Activated CD8-positive, alpha-beta T cell treated with anti-CD3 and anti-CD28 coated beads for 36 hours (primary cell): ENCODE measurements at regions of chr17 and their contacts with region 1.

Region 1: GRCh38 chr17:41648411-41649195 is 24.2 kb upstream of the KRT17 start:
- DNase-seq: peak; percentile 88
- ATAC-seq: peak; percentile 92
- H3K4me3 Mint-ChIP-seq: peak overlapping the region; percentile 43
- H3K27ac Mint-ChIP-seq: peak overlapping the region; percentile 65
- H3K4me1 Mint-ChIP-seq: peaks cover 7% of the 10 kb centered on the region
- H3K27me3 Mint-ChIP-seq: peaks cover 3% of the 10 kb centered on the region
- CTCF ChIP-seq: peak; percentile 88

Region 2: DNA sequence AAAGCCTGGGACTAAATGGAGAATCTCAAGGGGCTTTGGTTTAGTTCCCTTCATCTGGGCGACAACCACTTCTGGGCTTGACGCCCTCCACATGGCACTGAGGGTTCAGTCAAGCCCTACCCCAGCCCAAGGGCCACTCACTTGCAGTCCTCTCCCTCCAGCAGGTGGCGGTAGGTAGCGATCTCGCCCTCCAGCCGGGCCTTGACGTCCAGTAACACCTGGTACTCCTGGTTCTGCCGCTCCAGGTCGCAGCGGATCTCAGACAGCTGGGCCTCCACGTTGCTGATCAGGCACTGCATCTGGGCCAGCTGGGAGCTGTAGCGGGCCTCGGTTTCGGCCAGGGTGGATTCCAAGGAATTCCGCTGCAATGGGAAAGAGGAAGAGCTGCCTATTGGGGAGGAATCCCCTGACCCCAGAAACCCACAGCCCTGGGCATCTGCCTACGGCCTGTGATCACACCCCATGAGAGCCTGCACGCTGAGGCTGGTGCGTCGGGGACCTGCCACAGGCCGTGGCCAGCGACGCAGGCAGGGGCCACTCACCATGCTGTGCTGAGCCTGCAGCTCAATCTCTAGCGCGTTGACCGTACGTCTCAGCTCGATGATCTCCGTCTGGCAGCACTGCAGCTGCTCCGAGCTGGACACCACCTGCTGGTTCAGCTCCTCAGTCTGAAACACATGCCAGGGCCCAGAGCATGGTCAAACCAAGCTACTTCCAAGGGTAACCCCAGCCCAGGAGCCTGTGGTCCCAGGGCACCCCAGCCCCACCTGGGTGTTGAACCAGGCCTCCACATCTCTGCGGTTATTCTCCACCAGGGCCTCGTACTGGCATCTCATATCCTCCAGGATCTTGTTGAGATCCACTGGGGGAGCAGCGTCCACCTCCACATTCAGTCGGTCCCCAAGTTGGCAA is 161.5 kb before region 1 on chr17:
- CTCF ChIA-PET with region 1: interaction called, 13 read pairs
- POLR2A ChIA-PET with region 1: no interaction called
- intact Hi-C with region 1: no loop called
- DNase-seq: peak; percentile 61
- ATAC-seq: no peak
- H3K4me3 Mint-ChIP-seq: no peak overlapping the region
- H3K27ac Mint-ChIP-seq: no peak overlapping the region
- H3K4me1 Mint-ChIP-seq: peaks cover 2% of the 10 kb centered on the region
- H3K27me3 Mint-ChIP-seq: peaks cover 2% of the 10 kb centered on the region
- CTCF ChIP-seq: peak; percentile 56

Region 3: DNA sequence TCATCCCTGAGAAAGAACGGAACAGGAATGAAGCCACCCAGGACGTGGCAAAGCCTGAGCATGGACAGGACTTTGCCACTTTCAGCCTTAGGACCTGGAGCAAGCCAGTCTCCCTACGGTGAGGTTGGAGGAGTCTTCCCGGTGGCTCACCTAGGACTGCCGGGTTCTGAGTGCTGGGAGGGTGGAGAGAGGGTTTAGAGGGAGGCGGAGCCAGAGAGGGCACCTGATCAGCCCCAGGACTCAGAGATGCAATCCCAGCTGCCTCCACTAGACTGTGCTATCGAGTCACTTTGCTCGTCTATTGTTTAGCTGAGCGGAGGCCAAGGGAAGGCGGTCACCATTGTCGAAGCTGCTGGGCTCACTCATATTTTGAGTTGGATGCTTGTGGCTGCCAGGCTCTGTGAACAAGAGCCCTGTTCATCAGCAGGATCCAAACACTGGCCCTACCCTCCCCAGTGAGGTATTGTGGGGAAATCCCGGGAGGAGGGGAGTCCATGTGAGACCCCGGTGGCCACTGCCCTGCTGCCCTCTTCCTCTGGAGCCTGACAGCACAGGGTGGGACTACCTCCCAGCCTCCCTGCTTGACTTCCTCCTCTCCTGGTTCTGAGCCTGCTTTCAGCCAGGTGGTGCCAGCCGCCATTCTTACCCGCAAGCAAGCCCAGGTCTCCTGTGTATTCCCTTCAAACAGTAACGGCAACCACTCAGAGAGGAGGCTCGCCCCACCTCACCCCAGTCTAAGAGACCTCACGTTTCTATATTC is 68.9 kb before region 1 on chr17:
- CTCF ChIA-PET with region 1: interaction called, 16 read pairs
- POLR2A ChIA-PET with region 1: no interaction called
- intact Hi-C with region 1: no loop called
- DNase-seq: peak; percentile 90
- ATAC-seq: peak; percentile 100
- H3K4me3 Mint-ChIP-seq: no peak overlapping the region
- H3K27ac Mint-ChIP-seq: no peak overlapping the region
- H3K4me1 Mint-ChIP-seq: no peaks in the 10 kb centered on the region
- H3K27me3 Mint-ChIP-seq: peaks cover 38% of the 10 kb centered on the region
- CTCF ChIP-seq: peak; percentile 71

Region 4: DNA sequence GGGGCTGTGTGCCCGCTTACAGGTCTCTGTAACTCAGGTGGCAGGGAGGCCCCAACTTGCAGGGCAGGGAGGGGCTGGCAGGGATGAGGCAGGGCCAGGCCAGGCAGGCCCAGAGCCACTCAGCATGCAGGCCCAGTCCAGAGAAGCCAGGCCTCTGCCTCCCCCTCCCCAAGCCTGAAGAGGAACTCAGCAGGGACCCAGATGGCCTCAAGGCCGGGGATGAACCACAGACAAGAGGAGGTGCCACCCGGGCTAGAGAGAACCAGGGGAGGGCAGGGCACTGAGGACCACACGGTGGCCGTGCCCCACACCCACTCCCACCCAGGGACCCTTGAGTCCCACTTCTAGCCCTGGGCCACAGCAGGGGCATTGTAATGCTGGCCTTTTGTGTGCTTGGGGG is 10.2 kb after region 1 on chr17:
- CTCF ChIA-PET with region 1: interaction called, 435 read pairs
- POLR2A ChIA-PET with region 1: interaction called, 4 read pairs
- intact Hi-C with region 1: no loop called
- DNase-seq: no peak
- ATAC-seq: no peak
- H3K4me3 Mint-ChIP-seq: no peak overlapping the region
- H3K27ac Mint-ChIP-seq: no peak overlapping the region
- H3K4me1 Mint-ChIP-seq: no peaks in the 10 kb centered on the region
- H3K27me3 Mint-ChIP-seq: peaks cover 1% of the 10 kb centered on the region
- CTCF ChIP-seq: no peak

Region 5: GRCh38 chr17:41678907-41679739 is 30.5 kb after region 1 on chr17:
- CTCF ChIA-PET with region 1: interaction called, 14 read pairs
- POLR2A ChIA-PET with region 1: interaction called, 4 read pairs
- intact Hi-C with region 1: no loop called
- DNase-seq: peak; percentile 87
- ATAC-seq: peak; percentile 88
- H3K4me3 Mint-ChIP-seq: peak overlapping the region; percentile 88
- H3K27ac Mint-ChIP-seq: peak overlapping the region; percentile 97
- H3K4me1 Mint-ChIP-seq: peaks cover 48% of the 10 kb centered on the region
- H3K27me3 Mint-ChIP-seq: no peaks in the 10 kb centered on the region
- CTCF ChIP-seq: no peak

Region 6: DNA sequence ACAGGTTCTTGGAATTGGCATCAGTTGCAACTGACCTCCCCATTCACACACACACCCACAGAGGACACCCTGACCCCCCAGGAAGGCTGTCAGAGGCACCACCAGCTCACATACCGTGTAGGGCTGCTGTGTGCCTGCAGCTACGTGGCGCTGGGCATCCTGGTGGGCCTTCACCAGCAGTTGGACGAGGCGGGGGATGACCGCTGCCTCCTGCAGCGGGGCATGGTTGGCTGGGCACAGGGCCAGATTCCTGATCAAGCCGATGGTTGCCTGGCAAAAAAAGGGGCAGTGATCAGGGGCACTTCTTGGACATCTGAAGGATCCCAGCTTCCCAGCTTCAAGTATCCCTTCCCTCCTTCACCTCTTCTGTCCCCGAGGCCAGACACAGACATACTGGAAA is 110.0 kb after region 1 on chr17:
- CTCF ChIA-PET with region 1: no interaction called
- POLR2A ChIA-PET with region 1: no interaction called
- intact Hi-C with region 1: no loop called
- DNase-seq: no peak
- ATAC-seq: no peak
- H3K4me3 Mint-ChIP-seq: no peak overlapping the region
- H3K27ac Mint-ChIP-seq: no peak overlapping the region
- H3K4me1 Mint-ChIP-seq: no peaks in the 10 kb centered on the region
- H3K27me3 Mint-ChIP-seq: no peaks in the 10 kb centered on the region
- CTCF ChIP-seq: no peak

Region 7: DNA sequence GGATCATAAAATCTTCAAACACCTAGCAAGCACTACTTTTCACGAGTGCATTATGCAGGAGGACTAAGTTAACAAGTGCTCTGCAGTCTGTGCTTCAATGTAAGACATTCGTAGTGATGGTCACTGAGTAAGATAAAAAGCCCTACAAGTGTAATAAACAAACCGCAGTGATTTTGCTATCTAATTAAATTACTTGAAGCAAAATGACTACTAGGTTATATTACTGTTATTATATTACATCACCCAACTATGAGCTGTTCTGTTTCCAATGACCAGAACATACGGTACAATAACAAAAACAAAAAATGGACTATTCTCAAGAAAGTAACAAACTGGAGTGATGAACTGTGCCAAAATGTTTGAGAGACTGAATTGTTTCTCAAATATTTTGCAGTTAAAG is 200.2 kb after region 1 on chr17:
- CTCF ChIA-PET with region 1: no interaction called
- POLR2A ChIA-PET with region 1: no interaction called
- intact Hi-C with region 1: no loop called
- DNase-seq: no peak
- ATAC-seq: no peak
- H3K4me3 Mint-ChIP-seq: no peak overlapping the region
- H3K27ac Mint-ChIP-seq: no peak overlapping the region
- H3K4me1 Mint-ChIP-seq: peaks cover 24% of the 10 kb centered on the region
- H3K27me3 Mint-ChIP-seq: no peaks in the 10 kb centered on the region
- CTCF ChIP-seq: no peak